HEK293T (cell line): ENCODE measurements at regions of chr7 and their contacts with region 1.

Region 1: GRCh38 chr7:73578342-73579127 is at the start of gene TBL2:
- DNase-seq: peak; percentile 99

Region 2: DNA sequence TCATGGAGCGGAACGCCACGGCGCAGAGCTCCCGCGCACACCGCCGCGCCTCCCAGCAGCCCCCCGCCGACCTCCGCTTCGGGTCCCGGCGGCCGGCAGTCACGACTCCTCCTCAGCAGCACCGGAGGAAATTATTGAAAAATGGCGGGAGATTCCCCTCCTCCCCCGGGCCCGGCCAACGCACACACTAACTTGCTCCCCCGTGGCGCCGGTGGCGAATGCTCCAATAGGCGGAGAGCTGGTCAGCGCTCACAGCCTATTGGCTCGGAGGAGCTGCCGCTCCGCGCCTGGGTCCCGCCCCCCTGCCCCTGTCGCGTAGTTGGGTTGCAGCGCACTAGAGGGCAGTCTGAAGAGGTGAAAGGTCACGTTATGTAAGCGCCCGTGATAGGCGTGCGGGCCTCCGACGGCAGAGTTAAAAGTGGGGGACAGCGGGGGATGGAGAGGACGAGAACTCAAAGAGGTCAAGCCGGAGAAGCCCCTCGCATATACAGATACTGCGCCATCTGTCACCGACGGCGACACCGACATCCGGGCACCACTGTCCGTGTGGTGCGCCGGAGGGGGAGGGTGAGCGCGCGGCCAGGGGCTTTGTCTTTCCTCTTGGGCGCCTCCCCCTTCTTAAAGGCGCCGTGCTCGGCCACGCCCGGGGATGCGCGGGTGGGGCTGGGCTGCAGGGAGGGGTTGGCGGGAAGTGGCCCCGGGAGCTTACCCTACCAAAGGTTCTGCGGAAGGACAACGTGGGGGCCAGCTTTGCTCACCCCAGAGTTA is 56.2 kb before region 1 on chr7 and contains the start of gene BAZ1B:
- CTCF ChIA-PET with region 1: no interaction called
- POLR2A ChIA-PET with region 1: interaction called, 18 read pairs
- DNase-seq: peak; percentile 95

Region 3: DNA sequence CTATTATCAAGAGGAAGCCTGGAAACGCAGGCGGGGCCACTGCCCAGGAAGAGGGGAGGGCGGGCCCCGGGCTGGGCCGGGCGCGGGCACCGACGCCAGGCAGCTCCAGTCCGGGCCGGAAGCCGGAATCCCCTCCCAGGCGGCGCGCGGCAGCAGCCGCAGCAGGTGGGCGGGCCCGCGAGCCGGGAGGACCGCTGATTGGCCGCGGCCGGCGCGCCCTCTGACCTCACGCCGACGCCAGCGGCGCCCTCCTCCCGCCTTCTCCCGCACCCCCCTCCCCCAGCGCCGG is 21.5 kb before region 1 on chr7:
- CTCF ChIA-PET with region 1: no interaction called
- POLR2A ChIA-PET with region 1: interaction called, 14 read pairs
- DNase-seq: peak; percentile 95

Region 4: GRCh38 chr7:73565675-73566340 is 12.7 kb before region 1 on chr7:
- CTCF ChIA-PET with region 1: no interaction called
- POLR2A ChIA-PET with region 1: interaction called, 18 read pairs
- DNase-seq: no peak

Region 5: DNA sequence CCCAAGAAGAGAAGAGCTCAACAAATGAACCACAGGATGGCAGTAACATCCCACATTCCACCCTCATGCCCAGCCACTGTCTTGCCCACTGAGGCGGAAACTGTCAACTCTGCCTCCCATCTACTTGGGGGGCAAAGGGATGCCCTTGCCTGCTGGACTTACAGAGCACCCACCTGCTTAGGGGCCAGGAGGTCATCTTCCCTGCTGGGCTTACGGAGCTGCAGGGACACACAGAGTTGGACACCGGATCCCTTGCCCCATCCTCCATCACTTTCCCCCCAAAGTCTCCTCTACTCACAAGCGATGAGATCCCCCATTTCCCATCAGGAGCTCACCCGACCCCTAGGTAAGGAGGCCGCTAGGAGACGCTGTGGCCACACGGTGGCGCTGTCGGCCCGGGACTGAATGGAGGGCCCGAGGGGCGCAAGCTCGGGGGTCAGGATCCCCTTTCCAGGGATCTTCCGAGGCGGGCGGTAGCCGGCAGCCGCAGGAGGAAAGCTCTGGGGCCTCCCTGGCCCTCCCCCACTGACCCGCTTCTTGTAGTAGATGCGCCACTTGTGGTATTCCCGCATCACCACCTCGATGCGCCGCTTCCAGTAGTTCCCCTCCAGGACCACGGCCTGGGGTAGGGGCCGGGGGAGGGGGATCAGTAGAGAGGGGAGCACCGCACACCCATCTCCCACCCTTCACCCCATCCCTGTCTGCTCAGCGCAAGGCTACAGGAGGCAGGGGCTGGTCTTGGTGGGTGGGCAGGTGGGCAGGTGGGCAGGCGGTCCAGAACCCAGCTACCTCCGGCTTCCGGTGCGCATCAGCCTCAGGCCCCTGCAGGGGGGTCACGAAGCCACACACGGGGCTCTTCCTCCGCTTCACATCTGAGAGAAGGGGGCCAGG is 28.5 kb after region 1 on chr7:
- CTCF ChIA-PET with region 1: no interaction called
- POLR2A ChIA-PET with region 1: no interaction called
- DNase-seq: peak; percentile 80